ENCODE measurements at regions of chr10 and their contacts with region 1.

Region 1: GRCh38 chr10:43138021-43138756 is at the start of gene CSGALNACT2:
- DNase-seq: peak; percentile 92
- H3K4me3 Mint-ChIP-seq: peak within 1 kb of the TSS; percentile 100
- H3K27ac Mint-ChIP-seq: peak within 1 kb of the TSS; percentile 100
- H3K4me1 Mint-ChIP-seq: peaks cover 48% of the 10 kb centered on the region
- H3K27me3 Mint-ChIP-seq: no peaks in the 10 kb centered on the region
- total RNA-seq, gene CSGALNACT2: 30.2 to 32.3 TPM

Region 2: DNA sequence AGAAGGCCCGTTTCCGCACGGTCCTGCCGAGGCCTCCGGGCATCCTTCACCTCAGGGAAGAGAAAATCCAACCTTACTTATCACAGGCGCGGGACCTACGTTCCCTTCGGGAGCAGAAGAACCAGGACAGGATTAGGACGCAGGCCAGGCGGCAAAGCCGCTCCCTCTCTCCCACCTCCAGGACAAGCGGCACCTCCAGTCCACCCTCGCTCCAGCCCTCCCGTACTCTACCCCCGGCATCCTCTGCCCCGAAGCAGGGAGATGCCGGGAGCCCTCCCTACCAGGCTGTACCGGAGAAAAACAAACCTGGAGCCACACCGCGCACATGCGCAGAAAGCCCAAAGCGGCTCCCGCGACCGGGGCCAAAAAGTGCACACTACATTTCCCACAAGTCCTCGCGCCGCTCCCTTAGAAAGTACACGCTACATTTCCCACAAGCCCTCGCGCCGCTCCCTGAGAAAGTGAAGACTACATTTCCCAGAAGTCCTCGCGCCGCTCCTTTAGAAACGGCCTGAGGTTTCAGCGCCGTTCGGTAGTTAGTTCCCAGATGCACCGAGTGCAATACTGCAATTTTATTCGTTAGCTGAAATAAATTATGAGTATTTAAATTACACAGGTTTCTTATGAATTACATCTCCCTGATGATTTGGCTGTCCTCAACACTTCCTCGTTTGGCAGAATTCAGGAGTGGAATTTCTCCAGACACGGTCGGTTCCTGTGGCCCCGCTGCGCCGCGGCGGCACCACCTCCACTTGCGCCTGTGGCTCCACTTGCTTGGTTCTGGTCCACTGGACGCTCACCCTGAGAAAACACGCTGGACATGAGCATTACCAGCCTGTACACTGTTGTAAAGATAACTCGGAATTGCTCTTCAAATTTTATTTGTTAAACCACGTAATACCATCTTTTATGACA is 585.4 kb before region 1 on chr10:
- CTCF ChIA-PET with region 1: no interaction called
- POLR2A ChIA-PET with region 1: no interaction called
- intact Hi-C with region 1: loop called (anchors 5 kb)
- DNase-seq: peak; percentile 97
- H3K4me3 Mint-ChIP-seq: peak overlapping the region; percentile 95
- H3K27ac Mint-ChIP-seq: peak overlapping the region; percentile 87
- H3K4me1 Mint-ChIP-seq: peaks cover 35% of the 10 kb centered on the region
- H3K27me3 Mint-ChIP-seq: no peaks in the 10 kb centered on the region

Region 3: GRCh38 chr10:42801135-42801534 is 337.1 kb before region 1 on chr10:
- CTCF ChIA-PET with region 1: no interaction called
- POLR2A ChIA-PET with region 1: interaction called, 5 read pairs
- intact Hi-C with region 1: loop called (anchors 2 kb)
- DNase-seq: peak; percentile 21
- H3K4me3 Mint-ChIP-seq: no peak overlapping the region
- H3K27ac Mint-ChIP-seq: peak overlapping the region; percentile 57
- H3K4me1 Mint-ChIP-seq: peaks cover 25% of the 10 kb centered on the region
- H3K27me3 Mint-ChIP-seq: no peaks in the 10 kb centered on the region

Region 4: GRCh38 chr10:43166880-43167497 is 28.8 kb after region 1 on chr10:
- CTCF ChIA-PET with region 1: interaction called, 6 read pairs
- POLR2A ChIA-PET with region 1: interaction called, 3 read pairs
- intact Hi-C with region 1: loop called (anchors 1 kb)
- DNase-seq: no peak
- H3K4me3 Mint-ChIP-seq: no peak overlapping the region
- H3K27ac Mint-ChIP-seq: no peak overlapping the region
- H3K4me1 Mint-ChIP-seq: peaks cover 32% of the 10 kb centered on the region
- H3K27me3 Mint-ChIP-seq: no peaks in the 10 kb centered on the region

Region 5: GRCh38 chr10:43361986-43362839 is 224.0 kb after region 1 on chr10:
- CTCF ChIA-PET with region 1: no interaction called
- POLR2A ChIA-PET with region 1: no interaction called
- intact Hi-C with region 1: loop called (anchors 5 kb)
- DNase-seq: peak; percentile 99
- H3K4me3 Mint-ChIP-seq: peak overlapping the region; percentile 98
- H3K27ac Mint-ChIP-seq: peak overlapping the region; percentile 98
- H3K4me1 Mint-ChIP-seq: peaks cover 20% of the 10 kb centered on the region
- H3K27me3 Mint-ChIP-seq: no peaks in the 10 kb centered on the region

Region 6: DNA sequence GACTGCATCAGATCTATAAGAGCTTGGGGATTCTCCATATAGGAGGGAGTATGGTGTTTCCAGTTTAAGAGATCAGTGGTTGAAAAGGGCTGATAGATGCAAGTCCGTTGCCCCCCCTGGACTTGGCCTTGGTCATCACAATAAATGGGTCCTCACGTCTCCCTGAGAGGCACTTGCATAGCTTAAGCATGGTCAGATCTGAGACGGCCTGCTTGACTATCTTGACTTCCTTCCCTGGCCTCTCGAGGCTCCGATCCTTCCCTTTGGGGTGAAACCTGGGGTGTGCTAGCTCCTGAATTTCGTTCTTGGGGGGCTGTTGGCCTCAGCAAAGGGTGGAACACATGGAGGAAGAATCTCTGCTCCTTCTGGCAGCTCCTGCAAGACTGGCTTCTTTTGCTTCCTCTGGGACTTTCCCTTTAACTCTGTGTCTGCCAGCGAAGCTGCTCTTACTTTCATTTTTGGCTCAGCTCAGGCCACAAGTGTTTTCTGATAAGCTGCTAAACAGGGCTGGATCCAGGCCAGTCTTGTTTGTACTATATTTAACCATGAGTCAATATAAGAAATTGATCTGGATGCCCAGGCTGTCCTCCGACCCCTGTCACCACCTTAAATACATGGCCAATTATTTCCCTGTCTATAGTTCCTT is 456.9 kb after region 1 on chr10:
- CTCF ChIA-PET with region 1: no interaction called
- POLR2A ChIA-PET with region 1: no interaction called
- intact Hi-C with region 1: loop called (anchors 5 kb)
- DNase-seq: peak; percentile 68
- H3K4me3 Mint-ChIP-seq: peak overlapping the region; percentile 38
- H3K27ac Mint-ChIP-seq: no peak overlapping the region
- H3K4me1 Mint-ChIP-seq: peaks cover 23% of the 10 kb centered on the region
- H3K27me3 Mint-ChIP-seq: peaks cover 7% of the 10 kb centered on the region